Activated B cell treated with CpG ODN at 0.5 μM for 24 hours (primary cell): ENCODE measurements at regions of chr18 and their contacts with region 1.

Region 1: GRCh38 chr18:11980555-11981382 is 538 bp upstream of the IMPA2 start:
- DNase-seq: peak; percentile 96
- ATAC-seq: peak; percentile 91
- H3K4me3 Mint-ChIP-seq: peak overlapping the region; percentile 85
- H3K27ac Mint-ChIP-seq: peak overlapping the region; percentile 46
- H3K4me1 Mint-ChIP-seq: peaks cover 18% of the 10 kb centered on the region
- H3K27me3 Mint-ChIP-seq: no peaks in the 10 kb centered on the region
- CTCF ChIP-seq: no peak

Region 2: DNA sequence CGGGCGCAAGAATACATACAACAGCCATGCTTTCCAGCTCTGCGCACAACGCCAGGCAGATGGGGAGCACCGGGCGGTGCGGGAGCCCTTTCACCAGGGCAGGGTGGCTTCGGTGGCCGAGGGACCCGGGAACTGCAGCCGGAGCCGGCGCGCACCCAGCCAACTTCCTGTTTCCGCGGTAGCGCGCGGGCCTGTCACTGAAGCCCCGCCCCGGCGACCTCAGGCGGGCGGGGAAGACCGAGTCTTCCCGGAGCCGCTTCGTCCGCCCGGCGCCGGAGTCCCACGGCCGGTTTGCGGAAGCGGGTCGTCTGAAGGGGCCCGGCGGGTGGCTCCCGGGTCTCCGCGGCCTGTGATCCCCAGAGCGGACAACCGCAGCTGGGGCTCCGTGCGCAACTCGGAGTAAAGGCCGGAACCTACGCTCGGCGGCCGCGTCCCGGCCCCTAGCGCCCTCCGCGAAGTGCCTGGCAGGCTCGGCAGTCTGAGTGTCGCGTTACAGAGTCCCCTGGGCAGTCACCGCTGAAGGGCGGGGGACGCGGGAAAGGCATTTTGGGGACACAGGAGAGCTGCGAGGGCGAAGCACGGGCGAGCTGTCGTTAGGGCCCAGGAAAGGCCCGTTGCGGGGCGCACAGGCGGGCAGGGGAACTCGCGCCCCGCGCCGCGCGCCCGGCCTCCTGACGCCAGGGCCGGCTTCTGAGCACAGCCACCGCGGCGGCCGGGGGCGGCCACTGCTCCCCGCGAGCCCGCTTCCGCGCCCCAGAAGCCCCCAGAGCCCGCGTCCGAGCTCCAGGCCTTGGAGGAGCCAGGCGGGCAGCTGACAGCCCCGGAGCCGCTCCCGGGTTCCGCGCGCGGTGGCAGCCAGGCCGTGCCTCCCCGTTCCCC is 72.3 kb before region 1 on chr18 and contains the start of gene MPPE1:
- CTCF ChIA-PET with region 1: no interaction called
- POLR2A ChIA-PET with region 1: interaction called, 8 read pairs
- intact Hi-C with region 1: loop called (anchors 1 kb)
- DNase-seq: peak; percentile 87
- ATAC-seq: peak; percentile 91
- H3K4me3 Mint-ChIP-seq: peak within 1 kb of the TSS; percentile 94
- H3K27ac Mint-ChIP-seq: peak within 1 kb of the TSS; percentile 94
- H3K4me1 Mint-ChIP-seq: peaks cover 25% of the 10 kb centered on the region
- H3K27me3 Mint-ChIP-seq: no peaks in the 10 kb centered on the region
- CTCF ChIP-seq: no peak
- total RNA-seq, gene MPPE1: 39.0 and 52.9 TPM in 2 replicates

Region 3: DNA sequence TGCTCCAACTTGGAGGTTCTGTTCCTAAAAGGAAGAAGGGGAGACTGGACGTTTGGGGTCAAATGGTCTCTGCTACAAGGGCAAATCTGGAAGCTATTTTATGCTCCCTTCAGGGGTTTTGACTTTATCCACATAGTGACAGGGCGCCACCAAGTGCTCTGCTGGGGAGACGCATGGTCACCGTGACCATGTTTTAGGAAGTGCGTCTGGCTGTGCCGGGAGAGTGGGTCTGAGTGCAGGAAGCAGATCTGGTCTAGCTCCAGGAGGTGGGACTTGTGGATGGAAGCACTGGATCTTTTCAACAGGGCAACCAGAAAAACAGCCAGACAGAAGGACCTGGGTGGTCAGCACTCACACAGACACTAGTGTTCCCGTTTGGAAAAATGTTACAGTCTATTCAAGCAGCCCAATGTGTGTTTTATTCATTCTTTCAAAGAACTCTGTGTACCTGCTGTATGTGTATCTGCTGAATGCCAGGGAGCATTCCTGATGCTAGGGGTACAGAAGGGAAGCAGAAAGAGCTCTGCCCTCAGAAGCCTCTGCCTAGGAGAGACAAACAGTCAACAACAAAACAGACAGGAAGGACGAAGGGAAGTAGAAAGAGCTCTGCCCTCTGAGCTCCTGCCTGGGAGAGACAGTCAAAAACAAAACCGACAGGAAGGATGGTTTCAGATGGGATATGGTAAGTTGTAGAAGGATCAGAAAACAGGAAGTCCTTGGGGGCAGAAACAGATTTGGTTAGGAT is 14.8 kb after region 1 on chr18:
- CTCF ChIA-PET with region 1: interaction called, 22 read pairs
- POLR2A ChIA-PET with region 1: interaction called, 11 read pairs
- intact Hi-C with region 1: no loop called
- DNase-seq: peak; percentile 31
- ATAC-seq: peak; percentile 94
- H3K4me3 Mint-ChIP-seq: peak overlapping the region; percentile 17
- H3K27ac Mint-ChIP-seq: no peak overlapping the region
- H3K4me1 Mint-ChIP-seq: peaks cover 9% of the 10 kb centered on the region
- H3K27me3 Mint-ChIP-seq: no peaks in the 10 kb centered on the region
- CTCF ChIP-seq: no peak

Region 4: GRCh38 chr18:12408247-12408869 is 427.6 kb after region 1 on chr18:
- CTCF ChIA-PET with region 1: no interaction called
- POLR2A ChIA-PET with region 1: interaction called, 4 read pairs
- intact Hi-C with region 1: loop called (anchors 5 kb)
- DNase-seq: no peak
- ATAC-seq: peak; percentile 8
- H3K4me3 Mint-ChIP-seq: peak overlapping the region; percentile 76
- H3K27ac Mint-ChIP-seq: peak overlapping the region; percentile 68
- H3K4me1 Mint-ChIP-seq: peaks cover 18% of the 10 kb centered on the region
- H3K27me3 Mint-ChIP-seq: peaks cover 7% of the 10 kb centered on the region
- CTCF ChIP-seq: no peak

Region 5: DNA sequence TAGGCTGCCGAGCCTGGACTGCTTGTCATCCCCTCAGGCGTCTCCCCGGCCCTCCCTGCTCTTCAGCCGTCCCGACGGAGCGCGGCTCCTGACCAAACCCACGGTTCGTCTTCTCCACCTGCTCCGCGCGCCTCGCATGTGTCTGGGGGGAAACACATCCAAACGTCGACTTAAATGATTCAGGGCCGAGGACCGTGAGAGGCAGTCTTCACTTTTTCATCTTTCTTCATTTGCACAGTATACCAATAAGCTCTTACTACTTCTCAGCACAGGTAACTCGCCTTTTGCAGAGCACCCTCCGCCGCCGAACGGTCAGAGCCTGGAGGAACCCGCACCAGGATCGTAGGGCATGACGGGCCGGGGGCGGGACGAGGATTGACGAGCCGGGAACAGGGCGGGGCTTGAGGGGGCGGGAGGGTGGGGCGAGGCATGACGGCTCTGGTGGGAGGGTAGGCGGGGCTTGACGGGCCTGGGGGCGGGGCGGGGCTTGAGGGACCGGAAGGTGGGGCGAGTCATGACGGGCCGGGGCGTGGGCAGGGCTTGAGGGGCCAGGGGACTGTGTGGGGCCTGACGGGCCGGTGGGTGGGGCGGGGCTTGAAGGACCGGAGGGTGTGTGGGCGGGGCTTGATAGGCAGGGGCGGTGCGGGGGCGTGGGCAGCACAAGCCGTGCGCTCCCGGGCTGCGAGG is 966.7 kb after region 1 on chr18 and contains the start of gene SEH1L:
- CTCF ChIA-PET with region 1: no interaction called
- POLR2A ChIA-PET with region 1: interaction called, 3 read pairs
- intact Hi-C with region 1: loop called (anchors 5 kb)
- DNase-seq: peak; percentile 96
- ATAC-seq: peak; percentile 90
- H3K4me3 Mint-ChIP-seq: peak within 1 kb of the TSS; percentile 96
- H3K27ac Mint-ChIP-seq: peak within 1 kb of the TSS; percentile 97
- H3K4me1 Mint-ChIP-seq: peaks cover 24% of the 10 kb centered on the region
- H3K27me3 Mint-ChIP-seq: no peaks in the 10 kb centered on the region
- CTCF ChIP-seq: no peak
- total RNA-seq, gene SEH1L: 67.0 and 79.3 TPM in 2 replicates